ENCODE measurements at regions of chr9 and their contacts with region 1.

Region 1: DNA sequence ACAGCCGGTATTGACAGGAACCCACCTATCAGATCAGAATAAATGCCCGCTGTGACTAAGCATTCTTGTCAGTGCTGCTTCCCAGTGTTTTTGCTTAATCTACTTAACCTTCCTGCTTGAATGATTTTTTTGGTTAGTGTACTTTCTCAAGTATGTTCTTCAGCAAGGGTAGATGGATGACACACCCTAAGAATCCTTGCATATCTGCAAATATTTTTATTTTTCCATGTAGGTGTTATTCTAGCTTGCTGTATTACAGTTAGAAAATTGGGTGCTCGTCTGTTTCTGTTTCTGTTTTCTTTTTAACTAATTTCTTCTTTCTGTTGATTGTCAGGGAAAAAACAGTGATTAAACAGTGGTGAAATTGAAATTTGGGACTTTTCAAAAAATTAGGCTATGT is 64.5 kb downstream of the SEC61B start:
- DNase-seq: no peak
- ATAC-seq: no peak
- H3K4me3 ChIP-seq: no peak overlapping the region
- H3K27ac ChIP-seq: no peak overlapping the region
- H3K4me1 ChIP-seq: no peaks in the 10 kb centered on the region
- H3K27me3 ChIP-seq: peaks cover 23% of the 10 kb centered on the region
- CTCF ChIP-seq: no peak
- POLR2A ChIP-seq: no peak
- RAD21 ChIP-seq: no peak

Region 2: GRCh38 chr9:99813739-99814138 is 527.2 kb after region 1 on chr9:
- CTCF ChIA-PET with region 1: interaction called, 3 read pairs
- POLR2A ChIA-PET with region 1: interaction called, 17 read pairs
- dilution Hi-C with region 1: no loop called
- in situ Hi-C with region 1: no loop called
- intact Hi-C with region 1: no loop called
- DNase-seq: no peak
- ATAC-seq: no peak
- H3K4me3 ChIP-seq: no peak overlapping the region
- H3K27ac ChIP-seq: no peak overlapping the region
- H3K4me1 ChIP-seq: peaks cover 9% of the 10 kb centered on the region
- H3K27me3 ChIP-seq: no peaks in the 10 kb centered on the region
- CTCF ChIP-seq: no peak
- POLR2A ChIP-seq: no peak
- RAD21 ChIP-seq: no peak